Activated T-helper 2 cell treated with anti-CD3 and anti-CD28 coated beads, Interferon-gamma antibody, Interleukin-2, Interleukin-4, amounts not matched to agents 10 μg/mL and 5 μg/mL and 100 μg/mL, durations not matched to agents 14 hours and 24 hours and 36 hours (primary cell): ENCODE measurements at regions of chr3 and their contacts with region 1.

Region 1: GRCh38 chr3:39255503-39256325 is 24.1 kb downstream of the CX3CR1 start:
- DNase-seq: no peak
- H3K4me3 Mint-ChIP-seq: no peak overlapping the region
- H3K27ac Mint-ChIP-seq: peak overlapping the region; percentile 79
- H3K4me1 Mint-ChIP-seq: peaks cover 55% of the 10 kb centered on the region
- H3K27me3 Mint-ChIP-seq: no peaks in the 10 kb centered on the region

Region 2: GRCh38 chr3:39101022-39101689 is 154.6 kb before region 1 on chr3:
- intact Hi-C with region 1: no loop called
- DNase-seq: no peak
- H3K4me3 Mint-ChIP-seq: no peak overlapping the region
- H3K27ac Mint-ChIP-seq: no peak overlapping the region
- H3K4me1 Mint-ChIP-seq: peaks cover 14% of the 10 kb centered on the region
- H3K27me3 Mint-ChIP-seq: peaks cover 3% of the 10 kb centered on the region

Region 3: DNA sequence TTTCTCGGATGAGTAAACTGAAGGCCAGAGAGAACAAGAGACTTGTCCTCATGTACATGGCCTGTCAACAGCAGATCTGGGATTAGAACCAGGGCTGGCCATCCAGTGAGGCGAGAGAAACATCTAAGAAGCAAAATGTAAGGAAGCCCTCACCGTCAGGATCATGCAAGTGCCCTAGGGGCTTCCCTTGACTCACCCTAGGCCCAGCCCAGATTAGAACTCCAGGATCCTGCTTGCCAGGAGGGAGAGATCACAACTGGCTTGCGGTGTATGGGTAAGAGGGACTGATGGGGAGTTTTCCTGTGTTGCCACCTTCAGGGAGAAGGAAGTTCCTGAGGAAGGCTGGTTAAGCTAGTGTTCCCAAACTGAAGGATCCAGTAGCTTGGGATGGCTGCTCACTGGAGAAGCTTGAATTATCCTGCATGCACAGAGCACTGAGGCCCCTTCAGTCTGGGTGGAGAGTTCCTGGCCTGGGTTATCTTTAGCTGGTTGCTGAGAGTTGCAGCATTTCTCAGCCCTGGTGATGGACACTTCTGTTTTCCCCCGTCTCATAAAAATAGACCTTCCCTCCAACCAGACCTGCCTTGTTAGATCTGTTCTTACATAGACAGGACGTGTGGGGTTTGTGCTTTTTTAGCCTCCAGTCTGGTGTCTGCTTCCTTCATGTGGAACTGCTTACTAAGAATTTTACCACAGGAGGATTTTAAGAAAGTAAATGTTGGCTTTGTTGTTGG is 35.1 kb before region 1 on chr3:
- intact Hi-C with region 1: loop called (anchors 5 kb)
- DNase-seq: no peak
- H3K4me3 Mint-ChIP-seq: no peak overlapping the region
- H3K27ac Mint-ChIP-seq: no peak overlapping the region
- H3K4me1 Mint-ChIP-seq: peaks cover 38% of the 10 kb centered on the region
- H3K27me3 Mint-ChIP-seq: peaks cover 28% of the 10 kb centered on the region